Esophagus muscularis mucosa (tissue), 4 donors: ENCODE measurements at regions of chr19 and their contacts with region 1.

Region 1: GRCh38 chr19:58154679-58155648 is 4.4 kb upstream of the ZNF329 start:
- DNase-seq: peak; percentile 97
- H3K4me3 ChIP-seq: peak overlapping the region; percentile 67 to 98 (median 74)
- H3K27ac ChIP-seq: peak overlapping the region; percentile 87 to 96 (median 92)
- H3K4me1 ChIP-seq: peaks cover 30 to 46% (median 43%) of the 10 kb centered on the region in 4 donors
- H3K27me3 ChIP-seq: no peaks in the 10 kb centered on the region
- CTCF ChIP-seq: peak; percentile 98 to 100 (median 99)
- EP300 ChIP-seq: no peak
- POLR2A ChIP-seq: peak; percentile 22

Region 2: DNA sequence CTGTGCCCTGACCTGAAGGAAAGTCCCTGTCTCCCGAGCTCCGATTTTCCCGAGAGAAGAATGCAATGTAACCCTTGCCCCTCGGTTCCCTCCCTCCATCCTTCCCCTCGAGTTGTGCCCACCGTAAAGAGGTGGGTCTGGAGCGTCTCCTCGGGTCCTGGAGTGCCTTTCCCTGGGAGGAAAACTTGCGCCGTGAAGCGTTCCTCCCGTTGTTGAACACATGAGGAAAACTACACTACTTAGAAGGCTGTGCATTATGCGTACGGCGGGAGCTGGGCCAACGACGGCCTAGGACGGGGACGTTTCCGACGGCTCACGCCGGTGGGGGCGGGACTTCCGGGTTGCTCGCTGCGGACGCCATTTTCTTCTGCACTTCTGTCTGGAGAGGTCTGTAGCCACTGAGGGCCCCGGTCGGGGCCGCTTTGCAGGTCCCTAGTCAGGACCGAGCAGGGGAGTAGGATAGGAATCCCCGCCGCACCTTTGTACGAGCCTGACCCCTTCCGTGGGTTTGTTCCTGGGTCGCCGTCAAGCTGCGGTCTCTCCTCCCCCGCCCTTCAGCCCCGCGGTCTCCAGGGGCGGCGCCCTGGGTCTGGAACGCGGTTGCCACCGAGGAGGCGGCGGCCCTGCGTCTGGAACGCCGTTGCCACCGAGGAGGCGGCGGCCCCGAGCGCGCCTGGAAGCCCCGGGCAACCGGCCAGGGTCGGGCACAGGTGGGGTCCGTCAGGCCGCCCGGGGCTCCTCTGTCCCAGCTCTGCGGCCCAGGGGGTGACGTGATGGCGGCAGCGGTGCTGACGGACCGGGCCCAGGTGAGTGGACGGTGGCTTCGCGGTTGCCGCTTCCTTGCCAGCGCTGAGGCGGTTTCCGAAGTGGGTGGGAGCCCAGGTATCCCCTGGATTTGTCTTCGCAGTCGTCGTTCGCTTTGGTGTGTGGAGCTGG is 963.6 kb before region 1 on chr19 and contains the start of gene ZNF264:
- intact Hi-C with region 1: loop called (anchors 10 kb)
- DNase-seq: peak; percentile 98
- H3K4me3 ChIP-seq: peak within 1 kb of the TSS; percentile 67 to 97 (median 92)
- H3K27ac ChIP-seq: peak within 1 kb of the TSS; percentile 86 to 90 (median 88)
- H3K4me1 ChIP-seq: peaks cover 20 to 32% (median 28%) of the 10 kb centered on the region in 4 donors
- H3K27me3 ChIP-seq: peaks cover 0 to 11% (median 0%) of the 10 kb centered on the region in 4 donors
- CTCF ChIP-seq: no peak
- EP300 ChIP-seq: no peak
- POLR2A ChIP-seq: no peak
- total RNA-seq, gene ZNF264: 24.1 to 66.7 (median 42.5) TPM

Region 3: DNA sequence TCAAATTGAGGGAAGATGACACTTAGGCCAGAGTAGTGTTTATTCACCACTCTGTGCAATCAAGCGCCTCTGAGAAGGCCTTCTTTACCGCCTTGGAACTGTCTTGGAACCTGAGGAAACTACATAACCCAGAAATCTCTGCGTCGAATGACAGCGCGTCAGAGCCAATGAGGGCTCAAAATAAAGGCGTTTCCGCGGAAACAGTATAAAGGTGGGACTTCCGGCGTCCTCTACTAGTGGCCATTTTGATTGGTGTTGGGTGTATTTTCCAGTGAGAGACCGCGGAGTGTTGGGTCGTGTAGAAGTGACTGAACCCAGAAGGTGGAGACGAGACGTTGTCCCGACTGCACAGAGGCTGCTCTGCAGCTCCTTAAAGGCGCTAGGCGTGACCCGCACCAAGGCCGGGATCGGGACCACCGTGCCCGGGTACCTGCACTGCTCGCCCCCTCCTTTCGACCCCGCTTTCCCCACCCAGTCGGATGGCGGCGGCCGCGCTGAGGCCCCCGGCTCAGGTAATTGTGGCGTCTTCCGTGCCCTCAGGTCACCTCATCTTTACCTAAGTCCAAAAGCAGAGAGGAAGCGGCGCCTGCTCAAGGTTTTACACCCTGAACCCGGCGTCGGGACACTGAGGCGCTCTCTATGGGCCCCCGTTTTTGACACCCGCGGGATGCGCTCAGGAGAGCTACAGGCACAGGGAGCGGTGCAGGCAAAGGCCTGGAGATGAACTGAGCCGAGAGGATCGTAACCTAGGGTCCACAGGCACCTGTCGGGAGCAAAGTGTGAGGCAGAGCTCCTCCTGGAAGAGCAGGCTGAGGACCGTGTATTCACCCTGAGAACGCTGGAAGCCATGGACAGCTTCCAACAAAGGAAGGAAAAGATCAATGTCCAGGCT is 408.1 kb before region 1 on chr19 and contains the start of gene ZNF776:
- intact Hi-C with region 1: loop called (anchors 10 kb)
- DNase-seq: peak; percentile 93
- H3K4me3 ChIP-seq: peak within 1 kb of the TSS; percentile 80 to 96 (median 86)
- H3K27ac ChIP-seq: peak within 1 kb of the TSS; percentile 84 to 89 (median 89)
- H3K4me1 ChIP-seq: peaks cover 17 to 25% (median 21%) of the 10 kb centered on the region in 4 donors
- H3K27me3 ChIP-seq: no peaks in the 10 kb centered on the region
- CTCF ChIP-seq: peak in 1 of 3 experiments; percentile 8
- EP300 ChIP-seq: no peak
- POLR2A ChIP-seq: no peak
- total RNA-seq, gene ZNF776: 9.8 to 19.1 (median 14.1) TPM

Region 4: DNA sequence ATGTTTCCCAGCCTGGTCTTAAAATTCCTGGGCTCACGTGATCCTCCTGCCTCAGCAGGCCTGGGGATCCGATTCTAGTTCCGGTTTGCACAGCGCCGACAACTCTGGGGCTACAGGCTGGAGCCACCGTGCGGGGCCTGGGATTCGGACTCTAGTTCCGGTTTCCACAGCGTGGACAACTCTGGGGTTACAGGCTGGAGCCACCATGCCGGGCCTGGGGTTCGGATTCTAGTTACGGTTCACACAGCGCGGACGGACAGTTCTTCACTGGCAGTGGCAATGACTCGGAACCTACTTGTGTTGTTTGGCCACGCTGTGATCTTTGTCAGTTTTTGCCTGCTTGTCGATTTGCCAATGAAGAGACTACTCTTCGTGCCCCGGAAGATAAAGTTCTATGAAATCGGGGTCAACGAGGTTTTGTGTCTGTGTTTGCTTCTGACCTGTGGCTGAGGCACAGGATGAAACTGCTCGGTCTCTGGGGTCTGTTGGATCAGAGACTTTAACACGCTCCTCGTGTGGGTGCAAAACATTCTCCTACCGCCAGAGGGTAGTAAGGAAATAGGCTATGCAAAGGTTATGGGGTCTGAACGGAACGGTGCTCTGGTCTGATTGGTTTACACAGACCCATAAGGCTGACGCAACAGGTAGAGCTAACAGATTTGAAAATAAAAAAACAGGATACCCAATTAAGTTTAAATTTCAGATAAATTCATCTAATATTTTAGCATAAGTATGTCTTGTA is 133.3 kb before region 1 on chr19:
- intact Hi-C with region 1: loop called (anchors 1 kb)
- DNase-seq: no peak
- H3K4me3 ChIP-seq: no peak overlapping the region
- H3K27ac ChIP-seq: no peak overlapping the region
- H3K4me1 ChIP-seq: peaks cover 0 to 4% (median 2%) of the 10 kb centered on the region in 4 donors
- H3K27me3 ChIP-seq: peaks cover 0 to 21% (median 0%) of the 10 kb centered on the region in 4 donors
- CTCF ChIP-seq: peak; percentile 69 to 85 (median 83)
- EP300 ChIP-seq: no peak
- POLR2A ChIP-seq: no peak

Region 5: GRCh38 chr19:58182989-58183816 is 28.2 kb after region 1 on chr19 and contains the start of gene ZNF274:
- intact Hi-C with region 1: no loop called
- DNase-seq: peak; percentile 96
- H3K4me3 ChIP-seq: peak within 1 kb of the TSS; percentile 78 to 98 (median 87)
- H3K27ac ChIP-seq: peak within 1 kb of the TSS; percentile 96
- H3K4me1 ChIP-seq: peaks cover 0 to 28% (median 0%) of the 10 kb centered on the region in 4 donors
- H3K27me3 ChIP-seq: no peaks in the 10 kb centered on the region
- CTCF ChIP-seq: no peak
- EP300 ChIP-seq: no peak
- POLR2A ChIP-seq: peak; percentile 81
- total RNA-seq, gene ZNF274: 18.7 to 27.8 (median 22.8) TPM

Region 6: DNA sequence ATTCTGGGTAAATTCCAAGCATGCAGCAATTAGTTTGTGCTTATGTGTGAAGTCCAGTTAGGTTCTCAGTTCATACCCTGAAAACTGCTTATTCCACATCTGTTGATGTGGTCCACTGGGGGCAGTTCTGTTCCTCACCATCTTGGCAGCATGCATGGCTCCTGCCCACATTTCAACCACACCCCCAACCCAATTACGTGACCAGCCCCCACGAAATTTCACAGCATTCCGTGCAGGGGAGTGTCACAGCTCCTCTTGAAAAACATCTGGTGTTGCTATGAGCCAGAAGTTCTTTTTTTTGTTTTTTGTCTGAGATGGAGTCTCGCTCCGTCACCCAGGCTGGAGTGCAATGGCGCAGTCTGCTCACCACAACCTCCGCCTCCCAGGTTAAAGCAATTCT is 141.1 kb after region 1 on chr19:
- intact Hi-C with region 1: no loop called
- DNase-seq: no peak
- H3K4me3 ChIP-seq: no peak overlapping the region
- H3K27ac ChIP-seq: no peak overlapping the region
- H3K4me1 ChIP-seq: no peaks in the 10 kb centered on the region
- H3K27me3 ChIP-seq: no peaks in the 10 kb centered on the region
- CTCF ChIP-seq: no peak
- EP300 ChIP-seq: no peak
- POLR2A ChIP-seq: no peak